ENCODE measurements at regions of chr4 and their contacts with region 1.

Region 1: DNA sequence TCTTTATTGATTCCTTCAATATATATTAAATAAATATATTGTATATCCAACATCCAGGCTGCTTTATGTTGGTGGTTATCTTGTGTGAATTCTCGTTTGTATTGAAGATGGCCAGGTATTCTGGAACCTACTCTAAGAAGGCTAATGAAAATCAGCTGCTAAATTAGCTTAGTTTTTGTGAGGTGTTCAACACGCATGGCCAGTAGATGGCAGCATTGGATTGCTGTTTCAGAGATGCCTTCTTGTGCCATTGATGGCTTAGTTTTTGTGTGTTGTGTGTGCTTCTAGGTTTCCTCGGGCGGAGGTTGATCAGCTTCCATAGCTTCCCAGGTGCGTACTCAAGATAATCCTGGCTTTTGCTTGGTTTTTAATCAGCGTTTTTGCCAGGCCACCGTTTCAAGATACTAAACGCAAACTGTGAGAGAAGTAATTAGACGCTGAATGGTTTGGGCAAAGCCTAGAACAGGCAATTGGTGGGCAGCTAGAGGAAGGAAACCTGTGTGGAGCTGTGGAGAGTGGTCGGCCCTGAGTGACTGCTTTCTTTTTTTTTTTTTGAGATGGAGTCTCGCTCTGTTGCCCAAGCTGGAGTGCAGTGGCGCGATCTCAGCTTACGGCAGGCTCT is 15.1 kb downstream of the NOCT start:
- DNase-seq: peak; percentile 67
- ATAC-seq: peak; percentile 67
- H3K4me3 ChIP-seq: no peak overlapping the region
- H3K27ac ChIP-seq: no peak overlapping the region
- H3K4me1 ChIP-seq: 0 out of 2 replicates have a peak, but pooled peaks cover 13% of the 10 kb centered on the region
- H3K27me3 ChIP-seq: no peaks in the 10 kb centered on the region
- CTCF ChIP-seq: peak; percentile 91
- EP300 ChIP-seq: no peak
- POLR2A ChIP-seq: no peak
- RAD21 ChIP-seq: peak; percentile 62

Region 2: GRCh38 chr4:139083956-139084803 is 53.5 kb after region 1 on chr4:
- CTCF ChIA-PET with region 1: no interaction called
- POLR2A ChIA-PET with region 1: no interaction called
- in situ Hi-C with region 1: loop called (anchors 5 kb)
- intact Hi-C with region 1: loop called (anchors 5 kb)
- DNase-seq: peak; percentile 89
- ATAC-seq: peak; percentile 79
- H3K4me3 ChIP-seq: peak overlapping the region; percentile 69 to 95 (median 71)
- H3K27ac ChIP-seq: peak overlapping the region; percentile 94
- H3K4me1 ChIP-seq: peaks cover 34% of the 10 kb centered on the region
- H3K27me3 ChIP-seq: no peaks in the 10 kb centered on the region; a peak in 1 of 5 replicates
- CTCF ChIP-seq: peak; percentile 49; the same call in 1 of the 2 replicates
- EP300 ChIP-seq: no peak
- POLR2A ChIP-seq: peak; percentile 72 to 82
- RAD21 ChIP-seq: peak; percentile 22; the same call in 1 of the 2 replicates

Region 3: DNA sequence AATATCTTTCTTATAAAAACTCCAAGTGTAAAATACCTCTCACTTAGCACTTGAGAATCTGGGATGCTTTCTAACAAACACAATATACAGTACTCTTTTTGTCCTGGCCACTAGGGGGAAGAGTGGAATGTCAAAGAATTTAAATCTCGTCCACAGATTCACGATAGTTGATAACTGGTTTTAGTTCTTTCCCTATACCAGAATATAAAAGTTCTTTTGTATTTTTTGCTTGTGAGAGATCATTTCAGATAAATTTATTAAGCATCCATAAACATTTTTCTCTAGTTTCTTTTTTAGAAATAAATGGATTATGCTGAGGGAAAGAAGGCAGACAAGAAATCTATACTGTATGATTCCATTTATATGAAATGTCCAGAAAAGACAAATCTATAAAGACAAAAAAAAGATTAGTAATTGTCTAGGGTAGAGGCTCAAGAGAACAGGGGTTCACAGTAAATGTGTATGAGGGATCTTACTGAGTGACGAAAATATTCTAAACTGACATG is 198.9 kb after region 1 on chr4:
- CTCF ChIA-PET with region 1: interaction called, 3 read pairs
- POLR2A ChIA-PET with region 1: no interaction called
- in situ Hi-C with region 1: no loop called
- intact Hi-C with region 1: loop called (anchors 5 kb)
- DNase-seq: peak; percentile 50
- ATAC-seq: peak; percentile 76
- H3K4me3 ChIP-seq: no peak overlapping the region
- H3K27ac ChIP-seq: no peak overlapping the region
- H3K4me1 ChIP-seq: peaks cover 14% of the 10 kb centered on the region
- H3K27me3 ChIP-seq: no peaks in the 10 kb centered on the region
- CTCF ChIP-seq: peak; percentile 69
- EP300 ChIP-seq: no peak
- POLR2A ChIP-seq: no peak
- RAD21 ChIP-seq: no peak

Region 4: DNA sequence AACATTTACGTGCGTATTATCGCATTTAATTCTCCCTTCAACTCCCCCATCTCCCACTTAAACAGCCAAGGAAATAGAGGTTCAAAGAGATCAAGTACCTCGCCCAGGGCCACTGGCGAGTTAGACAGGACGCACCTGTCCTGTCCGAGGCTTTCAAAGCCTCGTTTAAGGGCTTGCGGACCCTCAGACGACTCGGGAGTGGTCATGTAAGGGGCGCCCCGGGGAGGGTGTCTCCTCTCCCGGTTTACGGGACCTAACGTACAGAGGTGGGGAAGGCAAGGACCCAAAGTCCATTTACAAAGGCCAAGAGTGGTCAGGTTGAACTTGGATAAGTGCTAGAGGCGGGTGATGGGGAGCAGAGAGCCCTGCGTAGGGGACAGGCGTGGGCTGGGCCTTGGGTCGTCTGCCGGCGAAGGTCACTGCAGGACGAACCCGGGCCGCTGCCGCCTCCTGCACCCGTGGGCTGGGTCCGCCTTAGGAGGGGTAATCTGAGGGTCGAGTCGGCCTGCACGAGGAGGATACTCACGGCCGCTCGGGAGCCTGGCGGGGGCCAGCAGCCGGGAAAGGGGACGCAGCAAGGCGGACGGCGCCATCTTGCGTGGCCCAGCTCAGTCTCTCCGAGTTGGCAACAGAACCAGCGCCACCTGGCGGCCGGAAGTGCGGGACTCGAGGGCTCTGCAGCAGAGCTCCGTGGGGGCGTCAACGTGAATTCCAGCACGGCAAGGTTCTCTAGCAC is 264.6 kb after region 1 on chr4:
- CTCF ChIA-PET with region 1: interaction called, 4 read pairs
- POLR2A ChIA-PET with region 1: interaction called, 6 read pairs
- in situ Hi-C with region 1: no loop called
- intact Hi-C with region 1: loop called (anchors 5 kb)
- DNase-seq: peak; percentile 82
- ATAC-seq: peak; percentile 95
- H3K4me3 ChIP-seq: peak overlapping the region; percentile 85 to 93 (median 86)
- H3K27ac ChIP-seq: peak overlapping the region; percentile 92
- H3K4me1 ChIP-seq: peaks cover 54% of the 10 kb centered on the region
- H3K27me3 ChIP-seq: no peaks in the 10 kb centered on the region; a peak in 1 of 5 replicates
- CTCF ChIP-seq: peak; percentile 98
- EP300 ChIP-seq: 0 out of 4 replicates have a peak, but pooled peaks have one; percentile 11 to 41
- POLR2A ChIP-seq: peak; percentile 77 to 79; a peak in 3 of 4 replicates
- RAD21 ChIP-seq: peak; percentile 89

Region 5: GRCh38 chr4:139530833-139531427 is 500.2 kb after region 1 on chr4:
- CTCF ChIA-PET with region 1: no interaction called
- POLR2A ChIA-PET with region 1: no interaction called
- in situ Hi-C with region 1: no loop called
- intact Hi-C with region 1: loop called (anchors 10 kb)
- DNase-seq: peak; percentile 35
- ATAC-seq: peak; percentile 90
- H3K4me3 ChIP-seq: no peak overlapping the region
- H3K27ac ChIP-seq: no peak overlapping the region
- H3K4me1 ChIP-seq: peaks cover 10% of the 10 kb centered on the region
- H3K27me3 ChIP-seq: no peaks in the 10 kb centered on the region
- CTCF ChIP-seq: peak; percentile 80
- EP300 ChIP-seq: no peak
- POLR2A ChIP-seq: no peak
- RAD21 ChIP-seq: no peak

Region 6: GRCh38 chr4:140626661-140627376 is 1596.1 kb after region 1 on chr4:
- CTCF ChIA-PET with region 1: no interaction called
- POLR2A ChIA-PET with region 1: no interaction called
- in situ Hi-C with region 1: no loop called
- intact Hi-C with region 1: no loop called
- DNase-seq: no peak
- ATAC-seq: no peak
- H3K4me3 ChIP-seq: no peak overlapping the region
- H3K27ac ChIP-seq: no peak overlapping the region
- H3K4me1 ChIP-seq: no peaks in the 10 kb centered on the region
- H3K27me3 ChIP-seq: no peaks in the 10 kb centered on the region
- CTCF ChIP-seq: peak; percentile 16; the same call in 1 of the 2 replicates
- EP300 ChIP-seq: no peak
- POLR2A ChIP-seq: no peak
- RAD21 ChIP-seq: no peak

Measured in HepG2 (cell line).